H1 (cell line): ENCODE measurements at regions of chr11 and their contacts with region 1.

Region 1: GRCh38 chr11:117178210-117179034 is at the start of gene SIDT2:
- DNase-seq: peak; percentile 86 to 92
- H3K4me3 ChIP-seq: peak within 1 kb of the TSS; percentile 79 to 89 (median 82)
- H3K27ac ChIP-seq: peak within 1 kb of the TSS; percentile 16; the same call in 1 of the 2 replicates
- H3K4me1 ChIP-seq: peaks cover 6 to 16% (median 12%) of the 10 kb centered on the region in 4 experiments
- H3K27me3 ChIP-seq: no peaks in the 10 kb centered on the region
- CTCF ChIP-seq: peak in 1 of 3 experiments; percentile 5; a peak in 1 of 4 replicates
- EP300 ChIP-seq: peak in 1 of 2 experiments; percentile 22; a peak in 1 of 3 replicates
- POLR2A ChIP-seq: peak; percentile 80 to 81
- RAD21 ChIP-seq: no peak
- total RNA-seq, gene SIDT2: 14.6 and 18.5 TPM in 2 replicates

Region 2: DNA sequence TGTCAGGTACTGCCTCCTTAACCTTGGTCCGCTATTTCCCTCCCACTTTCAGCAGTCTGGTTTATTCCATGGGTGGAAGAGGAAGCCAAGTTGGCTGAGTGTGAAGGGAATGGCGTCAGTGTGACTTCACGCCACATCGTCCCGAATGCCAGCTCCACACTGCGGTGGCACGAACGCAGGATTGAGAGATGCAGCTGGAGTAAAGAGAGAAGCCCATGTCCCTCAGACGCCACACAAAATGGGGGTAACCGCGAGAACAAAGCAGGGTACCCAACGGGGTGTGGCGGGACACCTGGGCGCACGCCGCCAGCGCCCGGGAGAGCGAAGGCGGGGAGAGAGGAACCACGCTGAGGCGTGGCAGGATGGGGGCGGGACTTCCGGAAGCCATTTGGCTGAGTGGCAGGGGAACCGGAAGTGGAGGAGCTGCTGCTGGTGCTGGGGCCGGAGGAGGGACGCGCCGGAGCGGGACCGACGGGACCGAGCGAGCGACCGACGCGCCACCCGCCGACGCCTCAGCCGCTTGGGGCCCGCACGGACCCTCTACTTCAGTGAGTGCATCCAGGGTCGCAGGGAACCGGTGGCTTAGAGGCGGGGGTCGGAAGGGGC is 34.4 kb before region 1 on chr11 and contains the start of gene PAFAH1B2:
- CTCF ChIA-PET with region 1: interaction called, 11 read pairs
- POLR2A ChIA-PET with region 1: interaction called, 29 read pairs
- DNase-seq: peak; percentile 76 to 97
- H3K4me3 ChIP-seq: peak within 1 kb of the TSS; percentile 88 to 99 (median 92)
- H3K27ac ChIP-seq: peak within 1 kb of the TSS; percentile 92
- H3K4me1 ChIP-seq: peaks cover 0 to 11% (median 6%) of the 10 kb centered on the region in 4 experiments; a peak in 5 of 7 replicates
- H3K27me3 ChIP-seq: no peaks in the 10 kb centered on the region
- CTCF ChIP-seq: no peak
- EP300 ChIP-seq: no peak
- POLR2A ChIP-seq: peak in 1 of 2 experiments; percentile 82; a peak in 1 of 3 replicates
- RAD21 ChIP-seq: no peak
- total RNA-seq, gene PAFAH1B2: 151 and 161 TPM in 2 replicates

Region 3: DNA sequence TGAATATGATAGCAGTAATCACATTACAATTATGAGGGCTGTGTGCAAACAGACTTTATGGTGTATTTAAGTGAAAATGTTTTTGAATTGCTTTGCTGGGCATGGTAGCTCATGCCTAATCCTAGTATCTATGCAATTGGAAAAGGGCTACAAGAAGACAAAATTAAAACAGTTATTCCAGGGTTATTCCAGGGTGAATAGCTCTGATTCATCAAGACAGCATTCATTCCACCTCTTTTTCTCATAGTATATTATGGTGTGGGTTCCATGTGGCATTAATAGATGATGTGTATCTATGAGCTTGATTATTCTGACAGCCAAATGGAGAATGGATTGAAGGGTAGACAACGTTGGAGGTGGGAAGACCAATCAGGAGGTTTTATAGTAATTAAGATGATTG is 11.9 kb before region 1 on chr11:
- CTCF ChIA-PET with region 1: interaction called, 24 read pairs
- POLR2A ChIA-PET with region 1: interaction called, 35 read pairs
- DNase-seq: no peak
- H3K4me3 ChIP-seq: no peak overlapping the region
- H3K27ac ChIP-seq: no peak overlapping the region
- H3K4me1 ChIP-seq: no peaks in the 10 kb centered on the region
- H3K27me3 ChIP-seq: no peaks in the 10 kb centered on the region
- CTCF ChIP-seq: no peak
- EP300 ChIP-seq: no peak
- POLR2A ChIP-seq: no peak
- RAD21 ChIP-seq: no peak

Region 4: DNA sequence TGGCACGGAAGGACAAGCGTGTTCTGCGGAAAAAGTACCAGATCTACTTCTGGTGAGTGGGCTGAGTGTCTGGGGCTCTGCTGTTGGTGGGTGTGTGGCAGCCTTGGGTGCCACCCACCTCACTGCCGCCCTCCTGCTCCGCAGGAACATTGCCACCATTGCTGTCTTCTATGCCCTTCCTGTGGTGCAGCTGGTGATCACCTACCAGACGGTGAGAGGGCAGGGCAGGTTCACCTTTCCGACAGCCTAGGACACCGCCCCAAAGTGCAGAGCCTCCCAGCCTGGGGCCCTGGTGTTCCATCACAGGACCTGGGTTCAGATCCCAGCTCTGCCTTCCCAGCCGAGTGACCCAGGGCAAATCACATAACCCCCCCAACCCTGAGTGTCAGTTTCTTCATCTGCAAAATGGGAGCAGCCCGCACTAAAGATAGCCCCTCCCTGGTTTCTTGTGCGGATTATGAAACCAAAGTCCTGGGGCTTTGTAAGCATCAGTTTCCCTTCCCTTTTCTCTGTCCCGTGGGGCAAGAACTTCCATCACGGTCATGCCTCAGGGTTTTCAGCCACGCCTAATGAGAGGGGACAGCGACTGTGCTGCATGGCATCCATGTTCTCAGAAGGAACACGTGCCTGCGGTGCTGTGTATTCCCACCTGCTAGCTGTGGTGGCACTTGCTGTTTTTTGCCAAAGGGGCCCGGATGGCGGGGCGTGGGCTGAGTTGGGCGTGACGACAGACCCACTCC is 10.9 kb after region 1 on chr11:
- CTCF ChIA-PET with region 1: interaction called, 249 read pairs
- POLR2A ChIA-PET with region 1: interaction called, 14 read pairs
- DNase-seq: no peak
- H3K4me3 ChIP-seq: no peak overlapping the region
- H3K27ac ChIP-seq: no peak overlapping the region
- H3K4me1 ChIP-seq: no peaks in the 10 kb centered on the region
- H3K27me3 ChIP-seq: no peaks in the 10 kb centered on the region
- CTCF ChIP-seq: no peak
- EP300 ChIP-seq: no peak
- POLR2A ChIP-seq: no peak
- RAD21 ChIP-seq: no peak

Region 5: DNA sequence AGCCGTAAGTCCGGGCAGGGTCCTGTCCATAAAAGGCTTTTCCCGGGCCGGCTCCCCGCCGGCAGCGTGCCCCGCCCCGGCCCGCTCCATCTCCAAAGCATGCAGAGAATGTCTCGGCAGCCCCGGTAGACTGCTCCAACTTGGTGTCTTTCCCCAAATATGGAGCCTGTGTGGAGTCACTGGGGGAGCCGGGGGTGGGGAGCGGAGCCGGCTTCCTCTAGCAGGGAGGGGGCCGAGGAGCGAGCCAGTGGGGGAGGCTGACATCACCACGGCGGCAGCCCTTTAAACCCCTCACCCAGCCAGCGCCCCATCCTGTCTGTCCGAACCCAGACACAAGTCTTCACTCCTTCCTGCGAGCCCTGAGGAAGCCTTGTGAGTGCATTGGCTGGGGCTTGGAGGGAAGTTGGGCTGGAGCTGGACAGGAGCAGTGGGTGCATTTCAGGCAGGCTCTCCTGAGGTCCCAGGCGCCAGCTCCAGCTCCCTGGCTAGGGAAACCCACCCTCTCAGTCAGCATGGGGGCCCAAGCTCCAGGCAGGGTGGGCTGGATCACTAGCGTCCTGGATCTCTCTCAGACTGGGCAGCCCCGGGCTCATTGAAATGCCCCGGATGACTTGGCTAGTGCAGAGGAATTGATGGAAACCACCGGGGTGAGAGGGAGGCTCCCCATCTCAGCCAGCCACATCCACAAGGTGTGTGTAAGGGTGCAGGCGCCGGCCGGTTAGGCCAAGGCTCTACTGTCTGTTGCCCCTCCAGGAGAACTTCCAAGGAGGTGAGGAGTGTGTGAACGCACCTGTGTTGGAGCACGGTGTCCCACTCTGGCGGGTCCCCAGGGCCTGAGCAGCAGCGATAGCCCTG is 20.9 kb after region 1 on chr11 and contains the start of gene TAGLN:
- CTCF ChIA-PET with region 1: interaction called, 249 read pairs
- POLR2A ChIA-PET with region 1: interaction called, 153 read pairs
- DNase-seq: peak; percentile 83 to 86
- H3K4me3 ChIP-seq: peak within 1 kb of the TSS; percentile 37 to 58 (median 47)
- H3K27ac ChIP-seq: peak within 1 kb of the TSS; percentile 74; the same call in 1 of the 2 replicates
- H3K4me1 ChIP-seq: peaks cover 7 to 32% (median 28%) of the 10 kb centered on the region in 4 experiments
- H3K27me3 ChIP-seq: no peaks in the 10 kb centered on the region; a peak in 1 of 7 replicates
- CTCF ChIP-seq: no peak
- EP300 ChIP-seq: peak in 1 of 2 experiments; percentile 76; a peak in 1 of 3 replicates
- POLR2A ChIP-seq: peak; percentile 39 to 81
- RAD21 ChIP-seq: no peak
- total RNA-seq, gene TAGLN: 300 and 301 TPM in 2 replicates

Region 6: DNA sequence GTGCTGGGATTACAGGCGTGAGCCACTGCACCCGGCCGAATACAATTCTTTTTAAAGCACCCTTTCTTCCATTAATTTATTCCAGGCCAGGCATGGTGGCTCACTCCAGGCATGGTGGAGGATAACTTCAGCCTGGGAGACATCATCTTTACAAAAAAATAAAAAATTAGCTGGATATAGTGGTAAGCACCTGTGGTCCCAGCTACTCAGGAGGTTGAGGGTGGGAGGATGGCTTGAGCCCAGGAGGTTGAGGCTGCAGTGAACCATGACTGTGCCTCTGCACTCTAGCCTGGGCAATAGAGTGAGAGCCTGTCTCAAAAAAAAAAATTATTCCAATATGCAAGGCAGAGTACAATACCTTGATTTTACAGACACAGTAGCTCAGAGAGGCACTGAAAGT is 32.2 kb after region 1 on chr11:
- CTCF ChIA-PET with region 1: interaction called, 359 read pairs
- POLR2A ChIA-PET with region 1: interaction called, 153 read pairs
- DNase-seq: no peak
- H3K4me3 ChIP-seq: no peak overlapping the region
- H3K27ac ChIP-seq: no peak overlapping the region
- H3K4me1 ChIP-seq: no peaks in the 10 kb centered on the region
- H3K27me3 ChIP-seq: no peaks in the 10 kb centered on the region
- CTCF ChIP-seq: no peak
- EP300 ChIP-seq: no peak
- POLR2A ChIP-seq: no peak
- RAD21 ChIP-seq: no peak

Region 7: GRCh38 chr11:117232092-117232878 is 53.9 kb after region 1 on chr11 and contains the start of gene RNF214:
- CTCF ChIA-PET with region 1: interaction called, 359 read pairs
- POLR2A ChIA-PET with region 1: interaction called, 53 read pairs
- DNase-seq: peak; percentile 38 to 88
- H3K4me3 ChIP-seq: peak within 1 kb of the TSS; percentile 76 to 100 (median 96)
- H3K27ac ChIP-seq: peak within 1 kb of the TSS; percentile 71; the same call in 1 of the 2 replicates
- H3K4me1 ChIP-seq: peaks cover 0 to 8% (median 2%) of the 10 kb centered on the region in 4 experiments; a peak in 3 of 7 replicates
- H3K27me3 ChIP-seq: no peaks in the 10 kb centered on the region
- CTCF ChIP-seq: peak; percentile 81 to 97 (median 89)
- EP300 ChIP-seq: peak in 1 of 2 experiments; percentile 93; a peak in 2 of 3 replicates
- POLR2A ChIP-seq: peak in 1 of 2 experiments; percentile 39; a peak in 1 of 3 replicates
- RAD21 ChIP-seq: peak; percentile 9 to 53; a peak in 2 of 4 replicates
- total RNA-seq, gene RNF214: 33.7 and 35.6 TPM in 2 replicates

Region 8: DNA sequence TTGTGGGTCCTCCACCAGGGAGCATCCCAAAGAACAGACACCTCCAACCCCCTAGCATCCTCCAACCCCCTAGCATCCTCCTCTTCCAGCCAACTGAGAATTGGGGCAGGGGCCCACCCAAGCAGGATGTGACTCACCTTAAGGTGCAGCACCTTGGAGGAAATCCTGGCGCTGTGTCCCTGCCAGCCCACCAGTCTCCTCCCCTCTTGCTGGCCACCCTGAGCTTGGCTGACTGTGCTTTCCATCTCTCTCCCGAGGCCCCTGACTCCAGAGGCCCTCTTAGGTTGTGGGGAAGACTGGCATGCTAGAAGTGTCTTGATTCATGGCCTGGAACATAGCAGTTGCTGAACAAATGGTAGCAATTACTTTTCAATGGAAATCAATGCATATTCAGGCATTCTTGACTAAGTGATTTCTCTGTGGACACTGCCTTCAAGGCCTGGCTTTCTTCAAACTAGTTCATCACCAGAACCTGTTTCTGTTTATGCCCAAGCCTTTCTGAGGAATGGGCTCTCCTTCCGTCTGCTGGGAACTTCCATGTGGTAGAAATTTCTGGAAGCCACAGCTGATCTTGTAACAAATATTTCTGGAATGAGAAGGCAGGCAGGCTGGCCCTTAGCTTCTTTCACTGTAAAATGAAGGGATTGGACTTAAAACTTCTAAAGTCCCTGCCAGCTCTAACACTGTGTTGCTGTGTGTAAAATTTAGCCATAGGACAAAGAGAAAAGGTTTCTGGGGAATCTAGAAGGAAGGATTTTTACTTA is 209.8 kb after region 1 on chr11:
- CTCF ChIA-PET with region 1: no interaction called
- POLR2A ChIA-PET with region 1: no interaction called
- DNase-seq: no peak
- H3K4me3 ChIP-seq: no peak overlapping the region
- H3K27ac ChIP-seq: no peak overlapping the region
- H3K4me1 ChIP-seq: no peaks in the 10 kb centered on the region
- H3K27me3 ChIP-seq: no peaks in the 10 kb centered on the region
- CTCF ChIP-seq: no peak
- EP300 ChIP-seq: no peak
- POLR2A ChIP-seq: no peak
- RAD21 ChIP-seq: no peak